Activated naive CD4-positive, alpha-beta T cell treated with anti-CD3 and anti-CD28 coated beads for 36 hours (primary cell): ENCODE measurements at regions of chr9 and their contacts with region 1.

Region 1: GRCh38 chr9:121074635-121075385 is at the start of gene CNTRL:
- DNase-seq: peak; percentile 98
- H3K4me3 Mint-ChIP-seq: peak within 1 kb of the TSS; percentile 100
- H3K27ac Mint-ChIP-seq: peak within 1 kb of the TSS; percentile 94
- H3K4me1 Mint-ChIP-seq: peaks cover 47% of the 10 kb centered on the region
- H3K27me3 Mint-ChIP-seq: no peaks in the 10 kb centered on the region
- total RNA-seq, gene CNTRL: 59.4 to 63.6 TPM

Region 2: GRCh38 chr9:120579750-120580590 is 494.8 kb before region 1 on chr9 and contains the start of gene CDK5RAP2:
- CTCF ChIA-PET with region 1: no interaction called
- intact Hi-C with region 1: loop called (anchors 1 kb)
- DNase-seq: peak; percentile 96
- H3K4me3 Mint-ChIP-seq: peak within 1 kb of the TSS; percentile 97
- H3K27ac Mint-ChIP-seq: peak within 1 kb of the TSS; percentile 92
- H3K4me1 Mint-ChIP-seq: peaks cover 47% of the 10 kb centered on the region
- H3K27me3 Mint-ChIP-seq: no peaks in the 10 kb centered on the region
- total RNA-seq, gene CDK5RAP2: 92.7 to 99.7 TPM

Region 3: DNA sequence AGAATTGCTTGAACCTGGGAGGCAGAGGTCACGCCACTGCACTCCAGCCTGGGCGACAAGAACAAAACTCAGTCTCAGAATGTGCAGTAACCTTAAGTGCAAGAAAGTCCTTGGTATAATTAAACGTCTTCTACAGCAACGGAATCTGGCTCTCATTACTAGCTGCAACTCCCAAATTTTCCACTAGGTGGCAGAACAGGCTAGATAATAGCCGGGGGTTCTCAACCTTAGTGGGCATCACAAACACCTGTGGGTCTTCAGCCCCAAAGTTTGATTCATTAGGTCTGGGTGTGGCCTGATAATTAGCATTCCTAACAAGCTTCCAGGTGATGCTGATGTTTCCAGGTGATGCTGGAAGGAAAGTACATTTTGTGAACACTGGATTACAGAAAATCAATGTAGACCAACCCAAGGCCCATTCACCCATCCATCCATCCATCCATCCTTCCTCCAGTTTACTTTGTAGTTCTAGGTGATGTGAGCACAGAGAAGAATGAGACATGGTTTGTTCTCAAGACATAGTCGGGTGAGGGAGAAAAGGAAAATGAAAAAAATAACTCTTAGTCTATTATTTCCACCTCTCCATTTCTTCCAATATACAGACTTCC is 318.9 kb before region 1 on chr9:
- CTCF ChIA-PET with region 1: interaction called, 5 read pairs
- intact Hi-C with region 1: loop called (anchors 1 kb)
- DNase-seq: peak; percentile 83
- H3K4me3 Mint-ChIP-seq: no peak overlapping the region
- H3K27ac Mint-ChIP-seq: peak overlapping the region; percentile 58
- H3K4me1 Mint-ChIP-seq: peaks cover 34% of the 10 kb centered on the region
- H3K27me3 Mint-ChIP-seq: no peaks in the 10 kb centered on the region

Region 4: DNA sequence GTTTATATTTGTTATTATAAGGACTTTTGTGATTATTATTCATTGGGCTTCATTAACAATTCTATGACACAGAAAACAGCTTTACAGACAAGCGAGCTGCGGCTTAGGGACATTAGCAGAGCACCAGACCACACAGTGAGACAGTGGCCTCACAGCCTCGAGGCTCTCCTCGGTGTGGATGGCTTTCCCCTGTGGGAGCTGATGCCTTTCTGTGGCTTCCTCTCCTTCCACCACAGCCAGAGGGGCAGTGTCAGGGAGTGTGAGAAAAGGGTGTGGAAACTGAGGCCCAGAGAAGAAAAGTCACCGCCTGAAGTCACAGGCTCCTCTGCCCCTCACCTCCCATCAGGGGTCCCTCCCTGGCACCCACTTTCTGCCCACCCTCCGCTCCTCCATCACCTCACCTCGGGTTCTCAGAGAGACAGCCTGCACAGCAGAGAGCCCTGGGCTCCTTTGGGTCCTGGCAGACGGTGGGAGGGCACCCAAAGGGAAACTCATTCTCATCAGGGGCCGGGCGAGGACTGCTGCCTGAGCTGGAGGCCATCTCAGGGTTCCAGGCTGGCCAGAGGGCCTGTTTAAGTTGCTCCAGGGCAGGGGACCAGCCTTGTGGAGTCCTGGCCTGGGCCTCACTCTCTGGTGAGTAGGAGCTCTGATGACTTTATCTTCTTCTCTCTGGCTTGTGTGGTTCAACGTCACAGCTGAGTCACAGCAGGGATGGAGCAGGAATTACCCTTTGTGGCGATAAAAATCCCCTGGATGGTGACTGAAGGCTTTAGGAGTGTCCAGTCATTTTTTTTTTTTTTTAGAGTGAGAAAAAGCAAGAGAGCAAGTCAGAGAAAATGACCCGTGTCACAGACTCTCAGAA is 149.0 kb before region 1 on chr9:
- CTCF ChIA-PET with region 1: no interaction called
- intact Hi-C with region 1: loop called (anchors 2 kb)
- DNase-seq: peak; percentile 97
- H3K4me3 Mint-ChIP-seq: peak overlapping the region; percentile 92
- H3K27ac Mint-ChIP-seq: peak overlapping the region; percentile 98
- H3K4me1 Mint-ChIP-seq: peaks cover 74% of the 10 kb centered on the region
- H3K27me3 Mint-ChIP-seq: no peaks in the 10 kb centered on the region

Region 5: GRCh38 chr9:121059998-121060636 is 14.7 kb before region 1 on chr9:
- CTCF ChIA-PET with region 1: interaction called, 24 read pairs
- intact Hi-C with region 1: no loop called
- DNase-seq: peak; percentile 44
- H3K4me3 Mint-ChIP-seq: no peak overlapping the region
- H3K27ac Mint-ChIP-seq: no peak overlapping the region
- H3K4me1 Mint-ChIP-seq: peaks cover 16% of the 10 kb centered on the region
- H3K27me3 Mint-ChIP-seq: no peaks in the 10 kb centered on the region

Region 6: GRCh38 chr9:121133149-121133816 is 58.5 kb after region 1 on chr9:
- CTCF ChIA-PET with region 1: no interaction called
- intact Hi-C with region 1: no loop called
- DNase-seq: peak; percentile 83
- H3K4me3 Mint-ChIP-seq: no peak overlapping the region
- H3K27ac Mint-ChIP-seq: peak overlapping the region; percentile 63
- H3K4me1 Mint-ChIP-seq: peaks cover 60% of the 10 kb centered on the region
- H3K27me3 Mint-ChIP-seq: no peaks in the 10 kb centered on the region

Region 7: DNA sequence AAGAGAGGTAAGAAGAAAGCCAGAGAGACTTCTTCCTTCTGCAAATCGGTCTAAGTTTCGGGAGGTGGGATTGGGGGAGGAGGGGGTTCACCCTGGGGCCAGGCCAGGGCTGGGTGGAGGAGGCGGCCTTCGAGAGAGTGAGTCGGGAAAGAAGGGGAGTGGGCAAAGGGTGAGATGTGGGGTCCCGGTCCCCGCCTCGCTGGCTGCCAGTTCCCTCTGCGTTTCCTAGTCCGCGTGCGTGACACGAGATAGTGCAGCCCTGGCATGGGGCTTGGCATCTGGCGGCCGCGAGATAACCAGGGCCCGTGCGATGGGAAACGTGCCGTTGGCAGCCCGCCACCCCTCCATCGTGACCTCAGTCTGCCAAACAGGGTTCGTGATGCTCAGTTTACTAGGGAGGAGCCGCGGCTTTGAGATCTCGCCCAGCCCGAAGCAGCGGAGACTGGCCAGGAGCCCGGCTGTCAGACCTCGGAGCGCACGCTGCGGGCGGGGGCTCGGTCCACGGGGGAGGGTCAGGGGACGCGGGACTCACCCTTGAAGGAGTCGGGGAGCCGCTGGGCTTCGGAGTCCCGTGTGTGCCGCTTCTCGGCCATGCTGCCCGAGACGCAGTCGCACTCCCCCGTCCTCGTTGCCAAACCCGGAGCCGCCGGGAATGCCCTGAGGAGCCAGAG is 294.9 kb after region 1 on chr9 and contains the start of gene STOM:
- CTCF ChIA-PET with region 1: no interaction called
- intact Hi-C with region 1: loop called (anchors 2 kb)
- DNase-seq: peak; percentile 74
- H3K4me3 Mint-ChIP-seq: peak within 1 kb of the TSS; percentile 82
- H3K27ac Mint-ChIP-seq: peak within 1 kb of the TSS; percentile 88
- H3K4me1 Mint-ChIP-seq: peaks cover 31% of the 10 kb centered on the region
- H3K27me3 Mint-ChIP-seq: no peaks in the 10 kb centered on the region
- total RNA-seq, gene STOM: 34.0 to 37.7 TPM